Activated CD8-positive, alpha-beta memory T cell treated with anti-CD3 and anti-CD28 coated beads, Interleukin-2, amount 10 ng/mL, durations not matched to agents 7 days and 5 days (primary cell): ENCODE measurements at regions of chr1 and their contacts with region 1.

Region 1: GRCh38 chr1:109643385-109644230 is 12.3 kb upstream of the GSTM4 start:
- DNase-seq: peak; percentile 93
- ATAC-seq: peak; percentile 97
- H3K4me3 Mint-ChIP-seq: no peak overlapping the region
- H3K27ac Mint-ChIP-seq: no peak overlapping the region
- H3K4me1 Mint-ChIP-seq: peaks cover 11% of the 10 kb centered on the region
- H3K27me3 Mint-ChIP-seq: peaks cover 2% of the 10 kb centered on the region

Region 2: GRCh38 chr1:109548321-109549267 is 95.0 kb before region 1 on chr1 and contains the start of gene GNAI3:
- CTCF ChIA-PET with region 1: interaction called, 146 read pairs
- DNase-seq: peak; percentile 99
- ATAC-seq: peak; percentile 94
- H3K4me3 Mint-ChIP-seq: peak within 1 kb of the TSS; percentile 95
- H3K27ac Mint-ChIP-seq: peak within 1 kb of the TSS; percentile 98
- H3K4me1 Mint-ChIP-seq: peaks cover 35% of the 10 kb centered on the region
- H3K27me3 Mint-ChIP-seq: no peaks in the 10 kb centered on the region
- total RNA-seq, gene GNAI3: 7.5 to 8.3 TPM

Region 3: DNA sequence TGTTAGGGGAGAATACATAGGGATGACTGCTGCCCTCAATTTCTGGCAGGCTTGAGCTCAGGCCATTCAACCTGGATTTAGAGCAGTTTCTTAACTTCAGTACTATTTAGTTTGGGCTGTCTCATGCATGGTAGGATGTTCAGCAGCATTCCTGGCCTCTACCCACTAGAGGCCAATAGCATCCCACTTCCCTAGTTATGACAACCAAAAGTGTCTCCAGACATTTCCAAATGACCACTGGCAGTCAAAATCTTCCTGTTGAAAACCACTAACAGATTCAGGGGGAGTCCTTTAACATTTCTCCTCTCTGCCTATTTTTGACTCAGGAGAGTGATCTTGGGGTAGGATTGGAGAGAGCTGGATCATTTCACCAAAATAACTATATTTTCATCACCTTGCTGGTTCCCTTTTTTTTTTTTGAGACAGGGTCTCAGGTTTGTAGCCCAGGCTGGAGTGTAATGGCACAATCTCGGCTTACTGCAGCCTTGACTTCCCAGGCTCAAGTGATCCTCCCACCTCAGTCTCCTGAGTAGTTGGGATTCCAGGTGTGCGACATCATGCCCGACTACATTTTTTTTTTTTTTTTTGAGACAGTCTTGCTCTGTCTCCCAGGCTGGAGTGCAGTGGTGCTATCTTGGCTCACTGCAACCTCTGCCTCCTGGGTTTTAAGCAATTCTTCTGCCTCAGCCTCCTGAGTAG is 32.9 kb before region 1 on chr1:
- CTCF ChIA-PET with region 1: interaction called, 27 read pairs
- DNase-seq: no peak
- ATAC-seq: no peak
- H3K4me3 Mint-ChIP-seq: no peak overlapping the region
- H3K27ac Mint-ChIP-seq: no peak overlapping the region
- H3K4me1 Mint-ChIP-seq: peaks cover 2% of the 10 kb centered on the region
- H3K27me3 Mint-ChIP-seq: no peaks in the 10 kb centered on the region

Region 4: DNA sequence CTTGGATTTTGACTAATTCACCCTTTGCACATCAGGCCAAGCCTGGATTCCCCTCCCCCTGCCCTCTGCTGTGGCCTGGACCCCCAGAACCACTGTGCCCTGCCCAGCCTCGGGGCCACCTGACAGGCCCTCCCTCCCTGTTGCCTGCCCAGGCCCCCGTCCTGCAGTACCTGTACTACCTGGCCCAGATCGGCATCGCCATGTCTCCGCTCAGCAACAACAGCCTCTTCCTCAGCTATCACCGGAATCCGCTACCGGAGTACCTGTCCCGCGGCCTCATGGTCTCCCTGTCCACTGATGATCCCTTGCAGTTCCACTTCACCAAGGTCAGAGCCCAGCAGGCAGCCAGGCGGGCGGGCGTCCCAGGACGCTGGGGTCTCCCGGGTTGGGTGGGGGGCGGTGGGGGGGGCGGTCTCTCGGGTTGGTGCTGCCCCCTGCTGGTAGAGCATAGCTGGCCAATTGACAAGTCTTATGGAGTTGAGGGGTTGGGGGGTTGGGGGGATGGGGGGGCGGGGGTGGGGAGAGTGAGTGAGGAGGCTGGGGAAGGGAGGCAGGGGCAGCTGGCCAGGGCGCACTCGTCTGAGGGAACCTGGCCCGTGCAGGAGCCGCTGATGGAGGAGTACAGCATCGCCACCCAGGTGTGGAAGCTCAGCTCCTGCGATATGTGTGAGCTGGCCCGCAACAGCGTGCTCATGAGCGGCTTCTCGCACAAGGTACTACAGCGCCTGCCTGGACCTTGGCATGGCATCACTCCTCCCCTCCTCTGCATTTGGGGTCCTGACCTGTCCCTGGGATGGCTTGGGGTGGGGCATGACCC is 13.3 kb before region 1 on chr1:
- CTCF ChIA-PET with region 1: interaction called, 112 read pairs
- DNase-seq: peak; percentile 49
- ATAC-seq: no peak
- H3K4me3 Mint-ChIP-seq: no peak overlapping the region
- H3K27ac Mint-ChIP-seq: no peak overlapping the region
- H3K4me1 Mint-ChIP-seq: peaks cover 10% of the 10 kb centered on the region
- H3K27me3 Mint-ChIP-seq: no peaks in the 10 kb centered on the region

Region 5: GRCh38 chr1:109667452-109668122 is 24.0 kb after region 1 on chr1 and contains the start of gene GSTM2:
- CTCF ChIA-PET with region 1: interaction called, 29 read pairs
- DNase-seq: peak; percentile 73
- ATAC-seq: peak; percentile 90
- H3K4me3 Mint-ChIP-seq: peak within 1 kb of the TSS; percentile 29
- H3K27ac Mint-ChIP-seq: no peak within 1 kb of the TSS
- H3K4me1 Mint-ChIP-seq: peaks cover 25% of the 10 kb centered on the region
- H3K27me3 Mint-ChIP-seq: peaks cover 4% of the 10 kb centered on the region
- total RNA-seq, gene GSTM2: 8.0 to 17.8 TPM

Region 6: DNA sequence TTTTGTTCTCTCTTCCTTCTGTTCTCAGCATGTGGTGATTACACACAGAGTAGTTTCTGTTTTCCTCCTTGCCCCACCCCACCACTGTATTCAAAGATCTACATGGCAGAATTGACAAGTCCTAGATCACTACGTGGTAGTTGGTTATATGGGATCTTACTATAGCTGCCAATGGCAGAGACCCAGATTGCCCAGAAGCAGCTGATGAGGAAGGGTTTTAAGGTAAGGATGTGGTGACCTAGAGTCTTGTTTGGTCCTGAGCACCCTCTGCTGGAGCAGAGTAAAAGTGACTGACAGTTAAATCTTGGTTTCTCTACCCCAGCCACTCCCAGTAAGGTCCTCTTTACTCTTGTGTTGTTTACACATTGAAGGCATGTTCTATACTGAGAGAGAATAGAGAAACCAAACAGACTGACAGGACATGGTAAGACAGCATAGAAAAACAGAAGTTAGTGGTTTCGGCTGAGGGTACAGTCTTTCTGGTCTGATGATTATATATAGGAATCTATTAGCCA is 368.0 kb after region 1 on chr1:
- CTCF ChIA-PET with region 1: interaction called, 22 read pairs
- DNase-seq: peak; percentile 62
- ATAC-seq: peak; percentile 97
- H3K4me3 Mint-ChIP-seq: no peak overlapping the region
- H3K27ac Mint-ChIP-seq: peak overlapping the region; percentile 65
- H3K4me1 Mint-ChIP-seq: peaks cover 4% of the 10 kb centered on the region
- H3K27me3 Mint-ChIP-seq: no peaks in the 10 kb centered on the region